ENCODE measurements at regions of chr6 and their contacts with region 1.

Region 1: GRCh38 chr6:1665214-1665613 is 55.5 kb downstream of the FOXC1 start:
- DNase-seq: no peak
- H3K4me3 ChIP-seq: no peak overlapping the region
- H3K27ac ChIP-seq: no peak overlapping the region
- H3K4me1 ChIP-seq: no peaks in the 10 kb centered on the region
- H3K27me3 ChIP-seq: no peaks in the 10 kb centered on the region
- CTCF ChIP-seq: no peak
- POLR2A ChIP-seq: no peak

Region 2: GRCh38 chr6:1618825-1619672 is 46.2 kb before region 1 on chr6:
- intact Hi-C with region 1: no loop called
- DNase-seq: no peak
- H3K4me3 ChIP-seq: peak overlapping the region in 1 of 3 donors; percentile 15
- H3K27ac ChIP-seq: no peak overlapping the region
- H3K4me1 ChIP-seq: no peaks in the 10 kb centered on the region
- H3K27me3 ChIP-seq: peaks cover 0 to 2% of the 10 kb centered on the region in 2 donors
- CTCF ChIP-seq: no peak
- POLR2A ChIP-seq: no peak

Region 3: GRCh38 chr6:1629316-1629715 is 35.9 kb before region 1 on chr6:
- intact Hi-C with region 1: loop called (anchors 2 kb)
- DNase-seq: no peak
- H3K4me3 ChIP-seq: no peak overlapping the region
- H3K27ac ChIP-seq: no peak overlapping the region
- H3K4me1 ChIP-seq: no peaks in the 10 kb centered on the region
- H3K27me3 ChIP-seq: peaks cover 0 to 1% of the 10 kb centered on the region in 2 donors
- CTCF ChIP-seq: no peak
- POLR2A ChIP-seq: no peak

Region 4: GRCh38 chr6:2166717-2167116 is 501.5 kb after region 1 on chr6:
- intact Hi-C with region 1: no loop called
- DNase-seq: no peak
- H3K4me3 ChIP-seq: no peak overlapping the region
- H3K27ac ChIP-seq: no peak overlapping the region
- H3K4me1 ChIP-seq: no peaks in the 10 kb centered on the region
- H3K27me3 ChIP-seq: no peaks in the 10 kb centered on the region
- CTCF ChIP-seq: no peak
- POLR2A ChIP-seq: no peak

Measured in breast epithelium (tissue), 4 donors.